ENCODE measurements at regions of chr20 and their contacts with region 1.

Region 1: GRCh38 chr20:38221119-38221589 is 39.4 kb downstream of the KIAA1755 start:
- DNase-seq: peak; percentile 94
- H3K4me3 ChIP-seq: peak overlapping the region in 1 of 2 experiments; percentile 3; a peak in 2 of 4 replicates
- H3K27ac ChIP-seq: no peak overlapping the region
- H3K4me1 ChIP-seq: peaks cover 24 to 25% of the 10 kb centered on the region in 2 experiments; a peak in 3 of 4 replicates
- H3K27me3 ChIP-seq: no peaks in the 10 kb centered on the region
- CTCF ChIP-seq: peak; percentile 97
- EP300 ChIP-seq: no peak
- RAD21 ChIP-seq: peak; percentile 95

Region 2: DNA sequence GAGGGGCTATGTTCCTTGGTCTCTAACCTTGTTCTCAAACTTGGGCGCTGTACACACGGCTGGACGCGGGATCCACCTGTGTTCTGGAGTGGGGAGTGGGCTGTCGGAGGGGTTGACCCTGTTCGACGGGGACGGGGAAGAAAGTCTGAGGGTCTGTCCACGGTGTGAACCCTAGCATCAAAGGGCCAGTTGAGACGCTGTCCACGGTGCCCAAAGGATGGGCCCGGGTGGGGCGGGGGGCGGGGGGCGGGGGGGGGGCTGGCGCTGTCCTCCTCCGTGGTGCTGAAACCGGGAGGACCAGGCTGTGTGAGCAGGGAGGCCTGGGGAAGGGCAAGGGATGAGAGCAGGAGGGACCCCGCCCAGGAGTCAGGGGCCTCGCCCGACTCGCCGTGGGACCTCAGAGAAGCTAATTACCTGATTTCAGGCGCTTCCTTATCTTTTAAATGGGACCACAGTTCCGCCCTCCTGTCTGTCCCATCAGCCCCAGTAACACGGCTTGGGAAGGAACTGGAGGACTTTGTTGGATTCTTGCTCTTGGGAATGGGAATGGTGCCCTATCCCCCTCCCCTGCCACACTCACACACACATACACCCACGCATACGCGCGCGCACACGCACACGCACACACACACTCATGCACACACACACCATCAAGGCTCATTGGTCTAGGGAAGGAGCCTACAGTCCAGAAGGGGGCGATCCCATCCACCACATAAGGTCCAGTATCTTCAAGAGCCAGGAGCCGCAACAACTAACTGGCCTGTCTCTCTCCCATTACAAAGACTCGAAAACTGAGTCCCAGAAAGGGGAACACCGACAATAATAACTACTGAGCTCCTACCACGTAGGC is 319.3 kb before region 1 on chr20:
- CTCF ChIA-PET with region 1: interaction called, 19 read pairs
- POLR2A ChIA-PET with region 1: no interaction called
- DNase-seq: peak; percentile 86
- H3K4me3 ChIP-seq: peak overlapping the region; percentile 57 to 60
- H3K27ac ChIP-seq: no peak overlapping the region
- H3K4me1 ChIP-seq: peaks cover 12 to 25% of the 10 kb centered on the region in 2 experiments; a peak in 2 of 4 replicates
- H3K27me3 ChIP-seq: no peaks in the 10 kb centered on the region
- CTCF ChIP-seq: peak; percentile 63
- EP300 ChIP-seq: no peak
- RAD21 ChIP-seq: peak; percentile 83

Region 3: GRCh38 chr20:37968841-37969401 is 252.2 kb before region 1 on chr20:
- CTCF ChIA-PET with region 1: no interaction called
- POLR2A ChIA-PET with region 1: no interaction called
- DNase-seq: no peak
- H3K4me3 ChIP-seq: no peak overlapping the region
- H3K27ac ChIP-seq: no peak overlapping the region
- H3K4me1 ChIP-seq: no peaks in the 10 kb centered on the region
- H3K27me3 ChIP-seq: no peaks in the 10 kb centered on the region
- CTCF ChIP-seq: no peak
- EP300 ChIP-seq: no peak
- RAD21 ChIP-seq: no peak

Region 4: DNA sequence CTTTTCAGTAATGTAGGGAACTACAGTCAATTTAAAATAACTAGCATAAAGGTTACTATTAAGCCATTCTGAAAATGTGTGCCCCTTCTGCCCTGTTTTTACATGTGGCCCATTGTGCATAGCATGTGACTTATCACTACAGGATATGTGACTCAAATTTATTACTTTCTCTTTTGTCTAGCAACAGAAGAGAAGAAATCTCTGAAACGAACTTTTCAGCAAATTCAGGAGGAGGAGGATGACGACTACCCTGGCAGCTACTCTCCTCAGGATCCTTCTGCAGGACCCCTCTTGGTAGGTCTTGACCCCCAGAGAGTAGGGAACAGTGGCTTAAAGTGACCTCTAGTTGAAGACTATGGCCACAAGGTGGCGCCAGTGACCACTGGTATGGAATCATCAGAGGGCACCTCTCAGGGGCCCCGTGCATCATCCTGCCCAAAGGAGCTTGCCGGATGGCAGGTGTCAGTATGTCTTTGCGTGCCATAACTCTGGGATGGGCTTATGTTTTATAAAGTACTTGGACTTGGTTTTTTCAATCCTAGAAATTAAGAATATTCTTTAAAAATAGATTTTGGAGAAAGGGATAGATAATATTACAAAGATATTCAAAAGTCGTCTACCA is 163.7 kb before region 1 on chr20:
- CTCF ChIA-PET with region 1: interaction called, 725 read pairs
- POLR2A ChIA-PET with region 1: interaction called, 5 read pairs
- DNase-seq: peak; percentile 80
- H3K4me3 ChIP-seq: no peak overlapping the region; a peak in 1 of 4 replicates
- H3K27ac ChIP-seq: peak overlapping the region in 1 of 2 experiments; percentile 22; a peak in 2 of 4 replicates
- H3K4me1 ChIP-seq: no peaks in the 10 kb centered on the region; a peak in 1 of 4 replicates
- H3K27me3 ChIP-seq: no peaks in the 10 kb centered on the region
- CTCF ChIP-seq: peak; percentile 95
- EP300 ChIP-seq: no peak
- RAD21 ChIP-seq: peak; percentile 94

Region 5: DNA sequence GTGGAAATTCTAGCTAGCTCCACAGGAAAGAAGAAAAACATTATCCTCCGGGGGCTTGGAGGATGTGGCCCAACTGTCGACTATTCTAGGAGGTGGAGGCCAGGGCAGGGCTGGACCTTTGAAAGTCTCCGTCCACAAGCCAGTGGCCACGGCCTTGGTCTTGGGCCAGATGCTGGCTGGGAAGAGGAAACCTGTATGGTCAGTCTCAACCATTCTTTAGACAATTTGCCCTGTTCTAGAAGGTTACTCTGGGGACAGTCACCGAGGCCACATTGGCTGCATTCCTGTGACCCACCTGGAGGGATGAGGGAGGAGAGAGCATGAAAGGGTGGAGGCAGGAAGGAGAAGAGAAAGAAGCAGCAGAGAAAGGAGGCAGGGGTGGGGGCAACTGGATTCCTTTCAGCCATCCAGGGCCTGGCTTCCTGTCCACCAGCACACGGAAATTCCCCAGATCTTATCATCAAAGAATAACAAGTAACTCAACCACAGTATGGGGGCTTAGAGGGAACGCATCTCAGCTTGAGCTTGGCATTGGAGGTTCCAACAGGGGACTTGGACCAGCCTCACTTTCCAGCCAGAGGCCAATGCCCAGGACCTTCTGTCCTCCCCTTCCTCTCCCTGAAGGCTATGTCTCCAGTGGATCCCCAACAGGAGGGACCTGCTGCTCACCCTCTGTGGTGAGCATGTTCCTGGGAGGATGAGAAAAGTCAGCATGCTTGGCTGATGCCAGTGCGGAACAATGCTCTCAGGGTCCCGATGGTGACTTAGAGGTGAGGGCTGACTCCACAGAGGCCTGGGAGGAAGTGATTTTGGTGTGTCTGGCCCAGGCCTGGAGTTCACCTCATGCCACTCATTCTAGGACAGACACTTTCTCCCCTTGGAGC is 86.5 kb before region 1 on chr20:
- CTCF ChIA-PET with region 1: interaction called, 22 read pairs
- POLR2A ChIA-PET with region 1: no interaction called
- DNase-seq: peak; percentile 69
- H3K4me3 ChIP-seq: no peak overlapping the region
- H3K27ac ChIP-seq: peak overlapping the region; percentile 82 to 84
- H3K4me1 ChIP-seq: peaks cover 16 to 43% of the 10 kb centered on the region in 2 experiments
- H3K27me3 ChIP-seq: no peaks in the 10 kb centered on the region
- CTCF ChIP-seq: no peak
- EP300 ChIP-seq: peak; percentile 59 to 92; a peak in 3 of 4 replicates
- RAD21 ChIP-seq: no peak; the same call in 1 of the 2 replicates

Region 6: GRCh38 chr20:38165089-38165989 is 55.8 kb before region 1 on chr20 and contains the start of gene TGM2:
- CTCF ChIA-PET with region 1: interaction called, 53 read pairs
- POLR2A ChIA-PET with region 1: no interaction called
- DNase-seq: peak; percentile 92
- H3K4me3 ChIP-seq: peak within 1 kb of the TSS; percentile 58 to 77
- H3K27ac ChIP-seq: peak within 1 kb of the TSS in 1 of 2 experiments; percentile 58; a peak in 3 of 4 replicates
- H3K4me1 ChIP-seq: peaks cover 35 to 36% of the 10 kb centered on the region in 2 experiments; a peak in 3 of 4 replicates
- H3K27me3 ChIP-seq: no peaks in the 10 kb centered on the region
- CTCF ChIP-seq: peak; percentile 87
- EP300 ChIP-seq: no peak
- RAD21 ChIP-seq: peak; percentile 81
- polyA plus RNA-seq, gene TGM2: 548 and 676 TPM in 2 replicates

Region 7: GRCh38 chr20:38210741-38211140 is 10.4 kb before region 1 on chr20:
- CTCF ChIA-PET with region 1: interaction called, 95 read pairs
- POLR2A ChIA-PET with region 1: no interaction called
- DNase-seq: no peak
- H3K4me3 ChIP-seq: no peak overlapping the region
- H3K27ac ChIP-seq: peak overlapping the region in 1 of 2 experiments; percentile 18; a peak in 1 of 4 replicates
- H3K4me1 ChIP-seq: peaks cover 5 to 22% of the 10 kb centered on the region in 2 experiments; a peak in 3 of 4 replicates
- H3K27me3 ChIP-seq: no peaks in the 10 kb centered on the region
- CTCF ChIP-seq: no peak
- EP300 ChIP-seq: 0 out of 4 replicates have a peak, but pooled peaks of 1 of the 2 experiments have one; percentile 36
- RAD21 ChIP-seq: no peak

Region 8: DNA sequence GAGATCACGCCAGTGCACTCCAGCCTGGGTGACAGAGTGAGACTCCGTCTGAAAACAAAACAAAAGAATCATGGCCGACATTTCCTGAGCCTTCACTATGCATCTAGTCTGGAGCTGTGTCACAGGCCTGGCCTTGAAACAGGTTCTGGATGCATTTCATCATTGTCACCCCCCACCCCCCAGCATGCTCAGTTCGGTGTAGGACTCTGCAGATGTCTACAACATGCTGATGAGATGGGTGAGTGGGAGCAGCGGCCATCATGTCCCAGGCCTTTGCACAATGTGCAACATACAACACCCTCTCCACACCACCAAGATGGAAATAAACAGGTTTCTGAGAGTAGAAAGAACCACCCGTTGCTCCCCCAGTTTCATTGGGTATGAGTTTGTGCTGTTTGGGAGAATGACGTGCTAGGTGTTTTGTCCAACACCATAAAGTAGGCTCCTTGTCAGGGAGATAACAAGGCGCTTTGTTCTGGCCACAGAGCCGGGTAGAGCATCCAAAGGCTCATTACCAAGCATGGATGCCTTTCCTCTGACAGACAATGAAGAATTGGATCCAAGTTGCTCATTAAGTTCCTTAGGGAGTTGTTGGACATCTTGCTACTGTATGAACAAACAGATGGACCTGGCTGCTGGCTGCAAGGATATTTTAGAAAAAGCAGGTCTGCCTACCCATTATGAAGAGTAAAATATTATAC is 191.9 kb after region 1 on chr20:
- CTCF ChIA-PET with region 1: interaction called, 37 read pairs
- POLR2A ChIA-PET with region 1: no interaction called
- DNase-seq: no peak
- H3K4me3 ChIP-seq: no peak overlapping the region
- H3K27ac ChIP-seq: no peak overlapping the region
- H3K4me1 ChIP-seq: no peaks in the 10 kb centered on the region
- H3K27me3 ChIP-seq: no peaks in the 10 kb centered on the region
- CTCF ChIP-seq: no peak
- EP300 ChIP-seq: no peak
- RAD21 ChIP-seq: no peak

Measured in SK-N-SH (cell line).